Cardiac septum (tissue), 1 donor: ENCODE measurements at regions of chr6 and their contacts with region 1.

Region 1: DNA sequence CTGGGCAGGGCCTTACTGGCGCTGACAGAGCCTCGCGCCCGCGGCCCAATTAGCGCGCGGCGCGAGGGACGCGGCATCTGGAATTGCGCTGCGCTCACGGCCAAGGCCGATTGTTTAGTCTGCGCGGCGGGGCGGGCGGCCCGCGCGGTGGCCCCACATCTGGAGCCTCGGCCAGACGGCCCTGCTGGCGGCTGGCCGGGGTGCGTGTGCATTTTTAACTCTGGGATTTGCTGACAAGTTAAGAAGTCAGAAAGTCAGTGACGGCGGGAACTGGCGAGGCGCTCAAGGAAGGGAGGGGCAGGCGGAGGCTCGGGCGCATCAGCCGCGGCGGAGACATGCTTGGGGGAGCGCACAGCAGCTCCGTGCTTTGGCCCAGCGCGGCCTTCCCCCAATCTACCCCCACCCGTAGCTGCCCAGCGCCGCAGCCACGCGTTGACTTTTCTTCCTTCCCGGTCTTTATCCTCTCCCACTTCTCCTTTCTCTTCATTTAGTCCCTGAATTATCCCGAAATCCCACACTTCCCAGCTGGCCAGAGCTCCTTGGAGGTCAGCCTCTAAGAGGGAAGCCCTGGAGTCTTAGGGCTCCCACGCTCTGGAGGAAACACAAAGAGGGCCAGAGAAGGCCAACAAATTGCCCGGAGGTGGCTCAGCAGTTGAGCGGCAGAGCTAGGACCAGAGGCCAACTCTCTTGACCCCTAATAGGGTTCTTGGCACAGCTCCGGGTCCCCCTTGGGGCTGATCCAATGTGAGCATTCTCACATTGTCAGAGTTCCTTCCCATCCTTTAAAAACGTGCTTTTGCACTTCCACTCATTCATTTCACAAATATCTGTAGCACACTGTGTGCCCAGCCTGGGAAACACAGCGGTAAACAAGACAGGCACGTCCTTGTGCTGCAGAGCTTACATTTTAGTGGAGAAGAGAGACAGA is 40.8 kb upstream of the FOXP4 start:
- DNase-seq: peak; percentile 81

Region 2: DNA sequence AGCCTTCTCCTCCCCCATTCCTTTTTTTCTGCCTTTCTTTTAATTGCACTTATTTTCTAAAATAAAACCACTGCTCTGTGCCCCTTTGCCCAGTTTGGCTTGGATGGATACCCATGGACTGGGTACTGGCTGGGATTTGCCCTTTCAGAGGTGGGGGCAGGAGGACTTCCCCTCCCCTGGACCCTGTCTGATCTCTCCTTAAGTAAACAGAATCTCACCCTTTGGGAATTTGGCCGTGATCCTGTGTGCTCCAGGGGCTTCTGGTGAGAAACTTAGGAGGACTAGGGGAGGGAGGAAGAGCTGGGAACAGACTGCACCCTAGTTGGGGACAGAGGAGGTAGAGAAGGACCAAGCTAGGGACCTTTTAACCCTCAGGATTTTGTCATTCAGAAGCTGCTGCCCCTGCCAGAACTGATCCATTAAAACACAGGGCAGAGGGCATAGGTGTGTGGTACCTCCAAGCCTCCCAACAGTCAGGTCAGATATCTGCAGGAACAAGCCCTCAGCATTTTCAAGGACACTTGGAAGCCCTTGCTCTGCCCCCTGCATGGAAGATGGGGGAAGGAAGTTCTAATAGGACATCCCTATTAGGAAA is 48.1 kb after region 1 on chr6:
- intact Hi-C with region 1: loop called (anchors 2 kb)
- DNase-seq: no peak